ENCODE measurements at regions of chr12 and their contacts with region 1.

Region 1: DNA sequence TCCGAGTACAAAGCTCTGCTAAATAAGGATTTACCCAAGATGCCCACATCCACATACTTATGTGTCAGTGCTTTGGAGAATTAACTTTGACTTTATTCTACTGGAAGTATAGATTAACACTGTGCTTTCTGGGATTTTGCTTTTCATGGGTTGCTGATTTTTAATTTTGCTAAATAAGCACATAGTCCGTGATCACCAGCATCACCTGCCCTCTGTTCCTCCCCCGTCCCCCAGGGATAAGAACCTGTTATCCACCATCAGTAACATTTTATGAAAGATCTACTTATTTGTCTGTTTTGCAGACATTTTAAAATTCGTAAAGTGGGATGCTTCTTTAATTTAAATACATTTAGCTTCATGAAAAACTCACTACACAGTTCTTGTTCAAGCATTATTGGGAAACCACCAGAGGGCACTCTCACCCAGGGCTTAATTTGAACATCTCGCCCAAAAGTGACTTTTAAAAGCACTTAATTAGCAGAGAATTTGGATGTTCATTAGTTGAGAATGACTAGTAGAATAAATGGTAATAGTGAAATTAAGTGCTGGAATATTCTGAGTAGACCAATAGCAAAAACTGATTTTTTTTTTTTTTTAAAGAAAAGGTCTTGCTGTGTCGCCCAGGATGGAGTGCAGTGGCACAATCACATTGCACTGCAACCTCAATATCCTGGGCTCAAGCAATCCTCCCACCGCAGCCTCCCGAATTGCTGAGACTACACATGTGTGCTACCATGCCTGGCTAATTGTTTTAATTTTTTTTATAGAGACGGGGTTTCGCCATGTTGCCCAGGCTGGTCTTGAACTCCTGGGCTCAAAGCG is 35.7 kb downstream of the MRPL42 start:
- DNase-seq: peak in 1 of 2 donors; percentile 46
- ATAC-seq: no peak
- H3K4me3 ChIP-seq: no peak overlapping the region
- H3K27ac ChIP-seq: no peak overlapping the region
- H3K4me1 ChIP-seq: peaks cover 0 to 6% (median 0%) of the 10 kb centered on the region in 9 donors
- H3K27me3 ChIP-seq: no peaks in the 10 kb centered on the region
- CTCF ChIP-seq: peak; percentile 67 to 89 (median 82)

Region 2: GRCh38 chr12:93563807-93564538 is 61.0 kb after region 1 on chr12:
- intact Hi-C with region 1: loop called in 9 of 10 experiments (anchors 2 to 10 kb)
- DNase-seq: no peak
- ATAC-seq: peak in 1 of 8 donors; percentile 33
- H3K4me3 ChIP-seq: no peak overlapping the region
- H3K27ac ChIP-seq: no peak overlapping the region
- H3K4me1 ChIP-seq: peaks cover 0 to 1% (median 0%) of the 10 kb centered on the region in 9 donors
- H3K27me3 ChIP-seq: peaks cover 0 to 17% (median 0%) of the 10 kb centered on the region in 7 donors
- CTCF ChIP-seq: peak in 5 of 9 donors; percentile 19 to 44 (median 35)

Region 3: GRCh38 chr12:93742110-93742934 is 239.3 kb after region 1 on chr12:
- intact Hi-C with region 1: loop called in 1 of 10 experiments (anchors 10 kb)
- DNase-seq: peak; percentile 75 to 80
- ATAC-seq: peak; percentile 88 to 96 (median 90)
- H3K4me3 ChIP-seq: peak overlapping the region; percentile 16 to 68 (median 64)
- H3K27ac ChIP-seq: peak overlapping the region; percentile 86 to 95 (median 91)
- H3K4me1 ChIP-seq: peaks cover 5 to 88% (median 74%) of the 10 kb centered on the region in 9 donors
- H3K27me3 ChIP-seq: no peaks in the 10 kb centered on the region
- CTCF ChIP-seq: peak in 8 of 9 donors; percentile 11 to 57 (median 44)

Region 4: DNA sequence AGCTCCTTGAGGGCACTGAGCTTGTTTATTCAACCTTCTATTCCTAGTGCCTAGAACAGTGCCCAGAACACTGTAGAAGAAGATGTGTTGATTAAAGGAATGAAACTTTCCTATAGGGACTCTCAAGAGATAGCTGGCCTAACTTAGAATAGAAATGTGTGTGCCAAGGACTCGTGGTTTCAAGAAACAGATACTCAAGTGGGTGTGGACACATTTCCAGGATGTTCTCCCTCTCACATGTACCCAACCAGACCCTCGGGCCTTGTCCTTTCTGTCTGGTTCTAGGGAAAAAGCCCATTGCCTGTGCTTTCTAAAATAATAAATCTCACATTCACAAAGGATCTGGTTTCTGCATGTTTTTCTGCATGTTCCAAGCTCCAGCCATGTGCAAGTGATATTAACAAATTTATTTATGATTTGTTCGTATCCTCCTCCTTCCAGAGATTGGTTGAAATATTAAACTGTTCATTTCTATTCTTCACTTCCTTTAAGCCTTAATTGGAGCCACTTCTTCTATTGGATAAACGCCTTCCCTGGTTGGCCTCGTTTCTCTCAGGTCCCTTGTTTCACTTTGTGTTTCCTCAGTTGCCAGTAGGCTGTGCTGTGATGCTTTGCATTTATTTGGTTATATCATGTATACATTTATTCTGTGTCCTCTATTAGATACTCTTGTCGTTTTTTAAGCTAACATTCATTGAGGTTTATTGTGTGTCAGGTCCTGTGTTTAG is 263.9 kb after region 1 on chr12:
- intact Hi-C with region 1: loop called in 3 of 10 experiments (anchors 10 kb)
- DNase-seq: peak in 1 of 2 donors; percentile 69
- ATAC-seq: peak; percentile 71 to 91 (median 87)
- H3K4me3 ChIP-seq: no peak overlapping the region
- H3K27ac ChIP-seq: peak overlapping the region; percentile 5 to 77 (median 63)
- H3K4me1 ChIP-seq: peaks cover 7 to 69% (median 41%) of the 10 kb centered on the region in 9 donors
- H3K27me3 ChIP-seq: no peaks in the 10 kb centered on the region
- CTCF ChIP-seq: peak; percentile 30 to 83 (median 68)

Region 5: DNA sequence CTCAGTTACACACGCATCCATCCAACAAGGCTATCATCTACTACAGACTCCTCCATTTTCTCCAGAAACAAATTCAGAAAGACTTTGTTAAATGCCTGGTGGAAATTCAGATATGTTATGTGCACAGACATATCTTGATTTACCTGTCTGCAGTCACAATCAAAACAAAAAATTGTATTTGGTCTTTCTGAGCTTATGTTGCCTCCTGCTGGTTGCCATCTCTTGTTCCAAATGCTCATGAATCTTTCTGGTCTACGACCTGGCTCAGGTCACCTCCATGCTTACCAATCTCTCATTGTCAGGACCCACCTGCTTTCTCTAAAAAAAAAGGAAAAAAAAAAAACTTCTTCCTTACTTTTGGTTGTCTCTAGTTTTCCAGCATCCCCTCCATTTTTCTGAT is 476.2 kb after region 1 on chr12:
- intact Hi-C with region 1: loop called in 9 of 10 experiments (anchors 5 to 10 kb)
- DNase-seq: peak in 1 of 2 donors; percentile 19
- ATAC-seq: peak in 3 of 8 donors; percentile 49 to 57 (median 54)
- H3K4me3 ChIP-seq: no peak overlapping the region
- H3K27ac ChIP-seq: no peak overlapping the region
- H3K4me1 ChIP-seq: peaks cover 0 to 21% (median 3%) of the 10 kb centered on the region in 9 donors
- H3K27me3 ChIP-seq: no peaks in the 10 kb centered on the region
- CTCF ChIP-seq: peak in 8 of 9 donors; percentile 29 to 76 (median 58)

Region 6: GRCh38 chr12:93990832-93991803 is 488.1 kb after region 1 on chr12:
- intact Hi-C with region 1: loop called in 5 of 10 experiments (anchors 10 kb)
- DNase-seq: peak; percentile 41 to 68
- ATAC-seq: peak; percentile 60 to 97 (median 94)
- H3K4me3 ChIP-seq: peak overlapping the region in 6 of 10 donors; percentile 22 to 33 (median 28)
- H3K27ac ChIP-seq: peak overlapping the region in 9 of 10 donors; percentile 27 to 72 (median 51)
- H3K4me1 ChIP-seq: peaks cover 0 to 23% (median 12%) of the 10 kb centered on the region in 9 donors
- H3K27me3 ChIP-seq: no peaks in the 10 kb centered on the region
- CTCF ChIP-seq: peak; percentile 19 to 74 (median 49)

Measured in heart right ventricle (tissue), 16 donors.